Activated naive CD4-positive, alpha-beta T cell treated with anti-CD3 and anti-CD28 coated beads, Interleukin-2, amount 10 ng/mL, durations not matched to agents 7 days and 5 days (primary cell): ENCODE measurements at regions of chr17 and their contacts with region 1.

Region 1: DNA sequence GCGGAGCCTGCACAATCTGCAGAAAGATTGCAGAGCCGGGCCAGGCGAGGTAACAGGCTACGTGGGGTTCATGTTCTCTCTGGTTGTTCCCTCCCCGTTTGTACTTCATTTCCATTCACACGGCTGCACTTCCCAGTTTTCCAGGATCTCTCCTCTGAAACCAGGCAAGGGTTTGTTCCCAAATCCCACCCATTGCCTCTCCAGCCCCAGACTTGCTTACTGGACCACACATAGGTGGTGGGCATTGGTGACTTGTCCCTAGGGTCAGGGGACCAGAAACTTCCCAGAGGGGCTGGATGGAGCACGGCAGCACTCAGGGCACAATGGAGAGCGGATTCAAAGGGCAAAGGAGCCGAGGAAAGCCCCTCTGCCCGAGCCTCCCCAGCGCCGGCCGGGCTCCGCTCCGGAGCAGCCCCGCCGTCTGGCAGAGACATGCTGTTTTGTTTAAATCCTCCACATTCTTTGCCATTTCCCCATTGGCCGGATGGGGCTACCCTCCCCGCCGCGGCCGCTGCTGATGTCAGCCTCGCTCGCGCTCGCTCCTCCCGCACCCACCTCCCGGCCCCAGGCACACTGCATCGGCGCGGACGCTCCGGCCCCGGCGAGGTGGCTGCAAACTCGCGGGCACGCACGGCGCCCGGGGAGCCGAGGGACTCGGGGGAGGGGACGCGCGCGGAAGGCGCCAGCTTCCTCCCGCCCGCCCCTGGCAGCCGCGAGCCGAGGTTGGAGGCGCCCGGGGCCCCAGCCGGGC is at the start of gene PITPNC1:
- DNase-seq: peak; percentile 92
- H3K4me3 Mint-ChIP-seq: peak within 1 kb of the TSS; percentile 87
- H3K27ac Mint-ChIP-seq: peak within 1 kb of the TSS; percentile 96
- H3K4me1 Mint-ChIP-seq: peaks cover 46% of the 10 kb centered on the region
- H3K27me3 Mint-ChIP-seq: no peaks in the 10 kb centered on the region

Region 2: GRCh38 chr17:67359960-67360773 is 16.7 kb before region 1 on chr17:
- CTCF ChIA-PET with region 1: interaction called, 33 read pairs
- DNase-seq: peak; percentile 70
- H3K4me3 Mint-ChIP-seq: no peak overlapping the region
- H3K27ac Mint-ChIP-seq: peak overlapping the region; percentile 59
- H3K4me1 Mint-ChIP-seq: peaks cover 62% of the 10 kb centered on the region
- H3K27me3 Mint-ChIP-seq: no peaks in the 10 kb centered on the region

Region 3: GRCh38 chr17:67390646-67391384 is 13.9 kb after region 1 on chr17:
- CTCF ChIA-PET with region 1: interaction called, 37 read pairs
- DNase-seq: peak; percentile 73
- H3K4me3 Mint-ChIP-seq: peak overlapping the region; percentile 47
- H3K27ac Mint-ChIP-seq: peak overlapping the region; percentile 87
- H3K4me1 Mint-ChIP-seq: peaks cover 66% of the 10 kb centered on the region
- H3K27me3 Mint-ChIP-seq: no peaks in the 10 kb centered on the region

Region 4: DNA sequence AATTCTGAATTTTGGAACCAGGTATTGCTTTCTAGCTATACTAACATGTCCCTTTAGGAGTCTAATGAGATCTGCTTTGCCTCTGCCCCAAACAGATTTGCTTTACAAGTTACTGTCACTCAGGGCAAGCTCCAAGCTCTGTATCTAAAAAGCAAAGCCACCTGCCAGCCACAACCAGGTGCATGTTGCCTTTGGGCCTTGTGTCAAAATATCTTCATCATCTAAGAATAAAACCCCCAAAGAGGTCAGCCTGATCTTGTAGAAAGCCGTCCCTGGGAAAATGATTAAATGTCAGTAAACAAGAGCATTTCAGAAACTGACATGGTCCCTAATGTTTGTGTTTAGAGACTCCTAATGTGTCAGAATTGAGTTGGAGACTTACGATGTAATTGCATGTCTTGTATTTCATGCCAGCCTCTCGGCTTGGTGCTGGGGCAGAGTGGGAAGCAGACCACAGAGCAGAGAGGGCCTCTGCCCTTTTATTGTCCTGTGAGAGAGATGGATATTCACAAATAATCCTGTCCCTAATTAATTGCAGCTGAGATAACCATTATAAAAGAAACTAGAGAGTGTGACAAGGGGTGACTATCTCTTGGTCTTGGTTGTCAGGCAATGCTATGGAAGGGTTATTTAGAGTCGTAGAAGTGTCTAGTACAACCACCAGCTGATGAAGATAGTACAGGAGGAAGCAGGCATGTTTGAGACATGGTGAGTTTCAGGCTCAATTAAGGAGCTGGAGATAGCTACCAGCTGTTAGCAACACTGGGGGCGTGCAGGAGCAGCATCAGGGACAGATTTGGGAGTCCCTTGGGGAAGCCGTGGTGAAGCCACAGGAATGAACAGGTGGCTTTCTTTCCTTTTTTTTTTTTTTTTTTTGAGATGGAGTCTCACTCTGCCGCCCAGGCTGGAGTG is 90.9 kb after region 1 on chr17:
- CTCF ChIA-PET with region 1: interaction called, 11 read pairs
- DNase-seq: no peak
- H3K4me3 Mint-ChIP-seq: no peak overlapping the region
- H3K27ac Mint-ChIP-seq: peak overlapping the region; percentile 70
- H3K4me1 Mint-ChIP-seq: peaks cover 70% of the 10 kb centered on the region
- H3K27me3 Mint-ChIP-seq: no peaks in the 10 kb centered on the region

Region 5: GRCh38 chr17:67520252-67520906 is 143.5 kb after region 1 on chr17:
- CTCF ChIA-PET with region 1: no interaction called
- DNase-seq: no peak
- H3K4me3 Mint-ChIP-seq: no peak overlapping the region
- H3K27ac Mint-ChIP-seq: peak overlapping the region; percentile 17
- H3K4me1 Mint-ChIP-seq: peaks cover 25% of the 10 kb centered on the region
- H3K27me3 Mint-ChIP-seq: no peaks in the 10 kb centered on the region

Region 6: GRCh38 chr17:67602956-67603355 is 226.0 kb after region 1 on chr17:
- CTCF ChIA-PET with region 1: interaction called, 49 read pairs
- DNase-seq: peak; percentile 67
- H3K4me3 Mint-ChIP-seq: no peak overlapping the region
- H3K27ac Mint-ChIP-seq: peak overlapping the region; percentile 25
- H3K4me1 Mint-ChIP-seq: no peaks in the 10 kb centered on the region
- H3K27me3 Mint-ChIP-seq: no peaks in the 10 kb centered on the region

Region 7: GRCh38 chr17:67689534-67690177 is 312.7 kb after region 1 on chr17:
- CTCF ChIA-PET with region 1: interaction called, 30 read pairs
- DNase-seq: peak; percentile 62
- H3K4me3 Mint-ChIP-seq: no peak overlapping the region
- H3K27ac Mint-ChIP-seq: no peak overlapping the region
- H3K4me1 Mint-ChIP-seq: peaks cover 5% of the 10 kb centered on the region
- H3K27me3 Mint-ChIP-seq: no peaks in the 10 kb centered on the region